GM12878 (cell line): ENCODE measurements at regions of chr12 and their contacts with region 1.

Region 1: GRCh38 chr12:106160915-106161314 is 22.2 kb upstream of the NUAK1 start:
- DNase-seq: no peak
- ATAC-seq: no peak
- H3K4me3 ChIP-seq: no peak overlapping the region
- H3K27ac ChIP-seq: no peak overlapping the region
- H3K4me1 ChIP-seq: no peaks in the 10 kb centered on the region
- H3K27me3 ChIP-seq: no peaks in the 10 kb centered on the region
- CTCF ChIP-seq: no peak
- EP300 ChIP-seq: no peak
- POLR2A ChIP-seq: no peak
- RAD21 ChIP-seq: no peak

Region 2: DNA sequence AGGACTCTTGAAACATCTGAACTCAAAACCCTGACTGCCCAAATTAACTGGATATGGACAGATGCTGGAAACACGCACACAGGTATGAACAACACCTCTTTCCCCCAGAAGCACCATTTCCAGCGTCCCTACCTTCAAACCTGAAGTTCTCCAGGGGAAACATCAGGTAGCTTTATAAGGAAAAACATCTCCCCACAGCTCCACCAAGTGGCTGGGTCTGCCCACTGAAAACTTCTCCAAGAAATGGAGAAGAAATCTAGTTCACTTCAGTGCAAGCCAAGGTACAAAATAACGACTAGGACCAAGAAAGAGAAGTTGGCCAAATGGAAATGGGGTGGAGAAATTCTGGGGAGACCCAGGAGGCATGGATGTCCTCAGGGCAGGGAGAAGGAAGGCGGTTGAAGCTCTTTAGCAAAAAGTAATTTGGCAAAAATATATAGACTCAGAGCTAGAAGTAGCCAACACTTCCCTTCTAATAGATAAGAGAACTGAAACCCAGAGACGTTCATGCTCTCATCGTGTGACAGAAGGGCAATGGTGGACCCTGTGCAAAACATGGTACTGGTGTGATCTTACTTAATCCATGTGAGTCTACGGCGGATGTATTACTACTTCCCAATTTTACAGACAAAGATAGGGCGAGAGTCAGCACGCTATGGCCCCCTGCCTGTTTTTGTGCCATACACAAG is 11.7 kb before region 1 on chr12:
- CTCF ChIA-PET with region 1: interaction called, 11 read pairs
- POLR2A ChIA-PET with region 1: no interaction called
- RAD21 ChIA-PET with region 1: no interaction called
- SMC1A ChIA-PET with region 1: no interaction called
- in situ Hi-C with region 1: no loop called
- intact Hi-C with region 1: no loop called
- DNase-seq: no peak
- ATAC-seq: peak; percentile 61
- H3K4me3 ChIP-seq: no peak overlapping the region
- H3K27ac ChIP-seq: no peak overlapping the region
- H3K4me1 ChIP-seq: no peaks in the 10 kb centered on the region
- H3K27me3 ChIP-seq: no peaks in the 10 kb centered on the region; a peak in 2 of 4 replicates
- CTCF ChIP-seq: peak; percentile 43 to 51 (median 48); a peak in 5 of 6 replicates
- EP300 ChIP-seq: no peak
- POLR2A ChIP-seq: no peak
- RAD21 ChIP-seq: 0 out of 2 replicates have a peak, but pooled peaks have one; percentile 19

Region 3: GRCh38 chr12:106179086-106179485 is 18.2 kb after region 1 on chr12:
- CTCF ChIA-PET with region 1: no interaction called
- POLR2A ChIA-PET with region 1: no interaction called
- RAD21 ChIA-PET with region 1: no interaction called
- SMC1A ChIA-PET with region 1: no interaction called
- in situ Hi-C with region 1: no loop called
- intact Hi-C with region 1: no loop called
- DNase-seq: no peak
- ATAC-seq: no peak
- H3K4me3 ChIP-seq: no peak overlapping the region
- H3K27ac ChIP-seq: no peak overlapping the region
- H3K4me1 ChIP-seq: no peaks in the 10 kb centered on the region
- H3K27me3 ChIP-seq: no peaks in the 10 kb centered on the region; a peak in 1 of 4 replicates
- CTCF ChIP-seq: no peak
- EP300 ChIP-seq: no peak
- POLR2A ChIP-seq: no peak
- RAD21 ChIP-seq: no peak

Region 4: DNA sequence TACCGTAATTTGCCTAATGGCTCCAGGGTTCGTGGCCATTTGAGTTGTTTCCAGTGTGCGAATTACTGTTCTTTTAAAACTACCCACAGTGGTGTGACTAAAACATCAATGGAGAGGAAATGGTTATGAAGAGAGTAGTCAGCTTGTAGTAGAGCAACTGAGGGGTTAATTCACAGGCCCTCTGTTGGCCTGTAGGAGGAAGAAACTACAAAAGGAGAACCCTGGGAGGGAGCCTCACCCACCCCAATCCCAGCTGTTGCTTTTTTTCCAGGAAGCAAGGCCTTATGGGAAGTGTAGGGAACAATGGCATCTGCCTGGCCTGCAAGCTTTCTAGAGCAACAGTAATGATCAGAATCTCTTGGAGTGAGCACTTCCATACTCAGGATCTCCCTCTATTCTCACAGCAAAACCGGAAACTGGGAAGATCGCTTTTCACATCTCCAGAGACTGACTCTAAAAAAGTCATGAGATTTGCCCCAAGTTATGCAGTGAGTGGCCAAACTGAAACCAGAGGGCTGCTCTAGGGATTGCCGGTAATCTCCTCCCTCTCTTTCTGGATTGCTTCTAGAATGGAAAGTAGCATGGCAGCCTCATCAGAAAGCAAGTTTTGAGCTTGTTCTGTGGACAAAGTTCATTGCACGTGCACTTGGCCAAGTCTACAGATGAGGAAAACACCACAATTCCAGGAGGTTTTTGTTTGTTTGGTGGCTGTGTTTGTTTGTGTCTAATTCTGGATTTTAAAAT is 1399.4 kb after region 1 on chr12:
- CTCF ChIA-PET with region 1: no interaction called
- POLR2A ChIA-PET with region 1: no interaction called
- RAD21 ChIA-PET with region 1: no interaction called
- SMC1A ChIA-PET with region 1: no interaction called
- in situ Hi-C with region 1: no loop called
- intact Hi-C with region 1: no loop called
- DNase-seq: no peak
- ATAC-seq: no peak
- H3K4me3 ChIP-seq: no peak overlapping the region
- H3K27ac ChIP-seq: no peak overlapping the region
- H3K4me1 ChIP-seq: no peaks in the 10 kb centered on the region
- H3K27me3 ChIP-seq: peaks cover 2 to 7% of the 10 kb centered on the region in 2 experiments; a peak in 3 of 4 replicates
- CTCF ChIP-seq: no peak
- EP300 ChIP-seq: no peak
- POLR2A ChIP-seq: no peak
- RAD21 ChIP-seq: no peak